Mammary epithelial cell (primary cell): ENCODE measurements at regions of chr16 and their contacts with region 1.

Region 1: DNA sequence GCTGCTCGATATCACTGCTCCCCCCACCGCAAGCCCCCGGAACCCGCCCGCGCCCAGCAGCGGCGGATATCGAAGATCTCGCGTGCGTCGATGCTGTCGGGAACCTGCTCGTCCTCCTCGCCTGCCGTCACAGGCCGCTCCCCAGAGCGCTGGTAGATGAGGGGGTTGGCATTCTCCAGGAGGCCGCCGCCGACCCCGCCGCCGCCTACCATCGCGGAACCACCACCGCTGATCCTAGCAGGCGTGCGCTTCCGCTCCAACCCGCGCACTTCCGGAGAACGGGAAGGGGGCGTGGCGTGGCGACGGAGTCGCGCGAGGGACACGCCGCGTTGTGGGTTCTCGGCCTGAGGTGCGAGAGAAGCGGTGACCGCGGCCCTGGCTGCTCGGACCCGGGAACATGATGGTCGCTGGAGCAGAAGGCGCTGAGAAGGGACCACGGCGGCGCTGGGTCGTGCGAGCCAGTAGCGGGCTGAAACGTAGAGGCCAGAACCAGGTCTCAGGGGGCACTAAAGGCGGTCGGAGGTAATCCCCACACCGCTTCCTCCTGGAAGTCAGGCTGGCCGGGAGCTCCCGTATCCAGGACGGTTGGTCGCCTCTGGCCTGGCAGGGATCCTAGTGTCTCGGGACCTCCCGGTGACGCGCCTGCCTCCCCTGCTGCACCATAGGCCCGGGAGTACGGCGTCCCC is at the start of gene CIAO2B:
- DNase-seq: peak; percentile 81
- H3K4me3 ChIP-seq: peak within 1 kb of the TSS; percentile 66 to 94 (median 86)
- H3K27ac ChIP-seq: peak within 1 kb of the TSS; percentile 92
- H3K4me1 ChIP-seq: peaks cover 15% of the 10 kb centered on the region
- H3K27me3 ChIP-seq: no peaks in the 10 kb centered on the region
- CTCF ChIP-seq: no peak
- total RNA-seq, gene CIAO2B: 89.9 to 104 TPM

Region 2: GRCh38 chr16:66947302-66948065 is 13.2 kb after region 1 on chr16:
- CTCF ChIA-PET with region 1: no interaction called
- dilution Hi-C with region 1: no loop called
- in situ Hi-C with region 1: no loop called
- intact Hi-C with region 1: loop called (anchors 1 kb)
- DNase-seq: peak; percentile 78
- H3K4me3 ChIP-seq: peak overlapping the region; percentile 66 to 69 (median 68)
- H3K27ac ChIP-seq: peak overlapping the region; percentile 49
- H3K4me1 ChIP-seq: peaks cover 22% of the 10 kb centered on the region
- H3K27me3 ChIP-seq: no peaks in the 10 kb centered on the region
- CTCF ChIP-seq: peak; percentile 84 to 94

Region 3: GRCh38 chr16:67000384-67001351 is 66.4 kb after region 1 on chr16:
- CTCF ChIA-PET with region 1: no interaction called
- dilution Hi-C with region 1: no loop called
- in situ Hi-C with region 1: no loop called
- intact Hi-C with region 1: no loop called
- DNase-seq: no peak
- H3K4me3 ChIP-seq: peak overlapping the region; percentile 18 to 55 (median 37)
- H3K27ac ChIP-seq: no peak overlapping the region
- H3K4me1 ChIP-seq: peaks cover 16% of the 10 kb centered on the region
- H3K27me3 ChIP-seq: no peaks in the 10 kb centered on the region
- CTCF ChIP-seq: no peak

Region 4: GRCh38 chr16:67017810-67018488 is 83.7 kb after region 1 on chr16:
- CTCF ChIA-PET with region 1: no interaction called
- dilution Hi-C with region 1: no loop called
- in situ Hi-C with region 1: no loop called
- intact Hi-C with region 1: no loop called
- DNase-seq: peak; percentile 91
- H3K4me3 ChIP-seq: no peak overlapping the region
- H3K27ac ChIP-seq: no peak overlapping the region
- H3K4me1 ChIP-seq: peaks cover 22% of the 10 kb centered on the region
- H3K27me3 ChIP-seq: no peaks in the 10 kb centered on the region
- CTCF ChIP-seq: peak; percentile 85 to 98